Activated CD4-positive, alpha-beta T cell treated with anti-CD3 and anti-CD28 coated beads for 36 hours (primary cell): ENCODE measurements at regions of chr17 and their contacts with region 1.

Region 1: DNA sequence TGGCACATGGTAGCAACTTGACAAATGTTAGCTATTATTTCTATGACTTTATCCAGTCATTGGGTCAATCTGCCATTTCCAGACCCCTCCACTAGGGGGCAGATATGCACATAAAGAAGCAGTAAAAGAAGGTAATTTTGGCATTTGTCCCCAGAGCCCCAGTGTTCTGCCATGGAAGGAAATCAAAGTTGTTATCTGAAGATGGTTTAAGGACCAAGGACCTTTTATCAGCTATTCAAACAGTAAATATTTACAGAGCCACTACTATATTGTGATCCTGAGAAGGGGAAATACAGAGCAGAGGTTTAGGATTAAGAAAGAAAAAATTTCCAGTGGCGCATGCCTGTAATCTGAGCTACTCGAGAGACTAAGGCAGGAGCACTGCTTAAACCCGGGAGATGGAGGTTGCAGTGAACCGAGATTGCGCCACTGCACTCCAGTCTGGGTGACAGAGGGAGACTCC is 20.0 kb downstream of the TRAF4 start:
- DNase-seq: peak; percentile 87
- ATAC-seq: peak; percentile 63
- H3K4me3 Mint-ChIP-seq: no peak overlapping the region
- H3K27ac Mint-ChIP-seq: peak overlapping the region; percentile 80
- H3K4me1 Mint-ChIP-seq: peaks cover 25% of the 10 kb centered on the region
- H3K27me3 Mint-ChIP-seq: no peaks in the 10 kb centered on the region

Region 2: GRCh38 chr17:28247671-28248555 is 515.9 kb before region 1 on chr17:
- CTCF ChIA-PET with region 1: no interaction called
- POLR2A ChIA-PET with region 1: no interaction called
- intact Hi-C with region 1: no loop called
- DNase-seq: no peak
- ATAC-seq: no peak
- H3K4me3 Mint-ChIP-seq: no peak overlapping the region
- H3K27ac Mint-ChIP-seq: no peak overlapping the region
- H3K4me1 Mint-ChIP-seq: peaks cover 5% of the 10 kb centered on the region
- H3K27me3 Mint-ChIP-seq: peaks cover 9% of the 10 kb centered on the region

Region 3: DNA sequence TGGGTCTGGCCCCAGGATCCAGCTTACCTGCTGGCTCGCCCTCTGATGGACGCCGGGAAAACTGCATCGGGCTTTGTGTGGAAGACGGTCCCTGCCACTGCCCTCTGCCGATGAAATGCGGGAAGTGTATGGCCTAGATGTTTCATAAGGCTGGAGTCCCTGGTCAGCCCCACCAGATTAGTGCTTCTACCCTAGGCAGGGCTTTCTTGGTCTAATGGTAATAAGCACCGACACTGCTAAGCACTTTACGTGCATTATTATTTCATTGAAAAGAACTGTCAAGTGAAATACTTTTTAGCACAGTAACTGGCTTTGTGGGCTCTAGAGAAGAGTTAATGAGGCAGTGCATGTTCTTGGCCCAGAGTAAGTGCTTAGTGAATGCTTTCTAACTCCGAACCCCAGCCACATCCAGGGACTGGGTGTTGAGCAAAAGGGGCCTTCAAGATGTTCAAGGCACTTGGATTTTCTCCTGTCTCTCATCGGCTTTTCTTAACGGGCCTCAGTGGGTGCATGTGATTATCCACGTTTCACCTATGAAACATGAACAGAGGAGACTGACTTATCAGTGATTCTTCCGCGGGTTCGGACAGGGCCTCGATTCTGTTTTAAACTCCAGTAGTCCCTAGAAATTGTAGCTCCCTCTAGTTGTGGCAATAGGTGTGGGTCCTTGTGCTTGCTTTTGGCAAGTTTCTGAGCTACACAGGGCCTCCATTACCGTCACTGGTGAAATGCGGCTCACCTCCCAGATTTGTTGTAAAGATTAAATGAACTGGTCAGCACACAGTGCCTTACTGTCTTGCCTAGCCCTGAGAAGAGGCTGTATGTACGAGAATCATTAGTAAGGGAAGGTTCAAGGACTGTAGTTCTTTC is 13.4 kb before region 1 on chr17:
- CTCF ChIA-PET with region 1: interaction called, 110 read pairs
- POLR2A ChIA-PET with region 1: interaction called, 3 read pairs
- intact Hi-C with region 1: no loop called
- DNase-seq: peak; percentile 96
- ATAC-seq: peak; percentile 87
- H3K4me3 Mint-ChIP-seq: no peak overlapping the region
- H3K27ac Mint-ChIP-seq: peak overlapping the region; percentile 60
- H3K4me1 Mint-ChIP-seq: peaks cover 43% of the 10 kb centered on the region
- H3K27me3 Mint-ChIP-seq: no peaks in the 10 kb centered on the region

Region 4: DNA sequence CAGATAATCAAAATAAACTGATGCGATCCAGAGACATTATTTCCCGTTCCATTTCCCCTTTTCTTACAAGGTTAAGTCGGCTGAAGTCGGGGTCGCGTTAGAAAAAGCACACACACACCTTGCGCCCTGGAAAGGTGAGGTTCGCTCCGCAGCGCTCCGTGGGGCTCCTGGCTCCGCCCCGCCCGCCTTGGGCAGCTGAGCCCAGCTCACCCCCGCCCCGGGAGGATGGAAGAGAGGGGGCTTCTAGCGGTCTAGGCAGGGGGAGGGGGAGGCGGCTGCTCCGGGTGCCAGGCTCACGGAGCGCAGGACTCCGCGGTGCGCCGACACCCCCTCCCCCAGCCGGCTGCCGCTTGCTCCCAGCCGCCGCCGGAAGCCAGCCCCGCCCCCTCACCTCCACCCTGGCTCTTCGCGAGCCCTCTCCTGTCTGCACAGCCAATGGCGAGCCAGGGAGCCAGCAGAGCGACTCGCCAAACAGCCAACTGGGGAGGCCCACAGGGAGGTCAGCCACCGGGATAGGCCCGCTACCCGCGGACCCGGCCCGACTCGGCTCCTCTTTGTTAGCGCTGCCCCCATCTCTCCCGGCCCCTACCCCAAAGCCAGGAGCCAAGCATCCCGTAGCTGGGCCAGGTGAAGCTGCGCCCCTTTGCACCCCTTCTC is 48.4 kb after region 1 on chr17:
- CTCF ChIA-PET with region 1: interaction called, 45 read pairs
- POLR2A ChIA-PET with region 1: interaction called, 9 read pairs
- intact Hi-C with region 1: loop called (anchors 1 kb)
- DNase-seq: peak; percentile 99
- ATAC-seq: peak; percentile 99
- H3K4me3 Mint-ChIP-seq: peak overlapping the region; percentile 82
- H3K27ac Mint-ChIP-seq: peak overlapping the region; percentile 91
- H3K4me1 Mint-ChIP-seq: peaks cover 44% of the 10 kb centered on the region
- H3K27me3 Mint-ChIP-seq: no peaks in the 10 kb centered on the region

Region 5: DNA sequence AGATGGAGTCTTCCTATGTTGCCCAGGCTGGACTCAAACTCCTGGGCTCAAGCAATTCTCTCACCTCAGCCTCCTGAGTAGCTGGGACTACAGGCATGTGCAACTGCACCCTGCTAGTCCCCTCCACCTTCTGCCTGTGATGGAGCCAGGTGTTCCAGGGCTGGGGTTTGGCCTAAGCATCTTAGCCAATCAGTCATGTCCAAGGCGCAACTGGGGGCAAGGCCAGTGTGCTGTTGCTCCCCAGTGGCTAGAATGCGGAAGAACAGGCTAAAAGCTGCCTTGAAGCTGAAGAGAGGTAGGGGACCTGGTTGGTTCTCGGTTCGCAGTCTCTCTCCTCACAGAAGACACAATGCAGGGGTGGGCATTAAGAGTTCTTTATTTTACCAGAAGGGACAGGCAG is 115.1 kb after region 1 on chr17:
- CTCF ChIA-PET with region 1: interaction called, 17 read pairs
- POLR2A ChIA-PET with region 1: no interaction called
- intact Hi-C with region 1: no loop called
- DNase-seq: peak; percentile 55
- ATAC-seq: no peak
- H3K4me3 Mint-ChIP-seq: no peak overlapping the region
- H3K27ac Mint-ChIP-seq: no peak overlapping the region
- H3K4me1 Mint-ChIP-seq: peaks cover 31% of the 10 kb centered on the region
- H3K27me3 Mint-ChIP-seq: no peaks in the 10 kb centered on the region

Region 6: DNA sequence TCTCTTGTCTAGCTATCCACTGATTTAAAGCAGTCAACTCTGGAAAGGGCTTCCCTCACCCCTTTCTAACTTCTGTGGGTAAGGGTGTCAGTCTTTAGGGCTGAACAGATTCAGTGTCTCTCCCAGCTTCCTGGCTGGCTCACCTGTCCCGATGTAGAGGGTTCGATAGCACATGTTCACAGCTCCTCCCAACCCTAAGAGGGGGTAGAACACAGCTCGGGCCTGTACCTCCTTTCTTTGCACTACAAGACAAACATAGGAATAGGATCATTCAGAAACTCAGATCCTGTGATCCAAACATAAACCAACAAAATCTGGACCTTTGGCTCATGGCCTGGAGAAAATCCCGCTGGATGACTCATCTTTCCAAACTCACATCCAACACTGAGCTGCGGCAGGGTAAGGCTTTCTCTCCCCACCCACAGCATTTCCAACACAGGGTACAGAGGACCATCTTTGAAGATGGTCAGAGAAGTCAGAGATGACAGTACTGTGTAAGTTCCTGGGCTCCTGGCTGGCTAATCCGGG is 144.9 kb after region 1 on chr17:
- CTCF ChIA-PET with region 1: interaction called, 19 read pairs
- POLR2A ChIA-PET with region 1: no interaction called
- intact Hi-C with region 1: loop called in 1 of 2 experiments (anchors 1 kb)
- DNase-seq: no peak
- ATAC-seq: no peak
- H3K4me3 Mint-ChIP-seq: no peak overlapping the region
- H3K27ac Mint-ChIP-seq: peak overlapping the region; percentile 6
- H3K4me1 Mint-ChIP-seq: no peaks in the 10 kb centered on the region
- H3K27me3 Mint-ChIP-seq: no peaks in the 10 kb centered on the region

Region 7: DNA sequence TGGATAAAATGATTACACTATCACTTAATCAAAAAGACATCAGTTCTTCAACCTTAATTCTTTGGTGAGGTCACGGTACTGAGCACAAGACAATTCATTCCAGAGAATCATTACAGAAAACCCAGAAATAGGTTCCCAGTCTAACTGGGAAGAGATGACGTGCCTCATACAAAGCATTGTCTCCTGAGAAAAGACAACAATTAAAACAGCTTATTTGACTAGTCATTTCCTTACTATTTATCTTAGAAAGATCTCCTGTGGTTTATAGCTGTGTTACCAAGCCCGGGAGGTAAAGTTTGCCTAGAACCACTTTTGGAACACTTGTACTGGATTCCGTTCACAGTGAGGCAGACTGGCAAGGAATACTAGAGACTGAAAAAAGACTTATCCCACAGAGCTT is 182.4 kb after region 1 on chr17:
- CTCF ChIA-PET with region 1: interaction called, 11 read pairs
- POLR2A ChIA-PET with region 1: no interaction called
- intact Hi-C with region 1: no loop called
- DNase-seq: no peak
- ATAC-seq: peak; percentile 5
- H3K4me3 Mint-ChIP-seq: peak overlapping the region; percentile 56
- H3K27ac Mint-ChIP-seq: peak overlapping the region; percentile 87
- H3K4me1 Mint-ChIP-seq: peaks cover 68% of the 10 kb centered on the region
- H3K27me3 Mint-ChIP-seq: no peaks in the 10 kb centered on the region